Thyroid gland (tissue), 4 donors: ENCODE measurements at regions of chr9 and their contacts with region 1.

Region 1: DNA sequence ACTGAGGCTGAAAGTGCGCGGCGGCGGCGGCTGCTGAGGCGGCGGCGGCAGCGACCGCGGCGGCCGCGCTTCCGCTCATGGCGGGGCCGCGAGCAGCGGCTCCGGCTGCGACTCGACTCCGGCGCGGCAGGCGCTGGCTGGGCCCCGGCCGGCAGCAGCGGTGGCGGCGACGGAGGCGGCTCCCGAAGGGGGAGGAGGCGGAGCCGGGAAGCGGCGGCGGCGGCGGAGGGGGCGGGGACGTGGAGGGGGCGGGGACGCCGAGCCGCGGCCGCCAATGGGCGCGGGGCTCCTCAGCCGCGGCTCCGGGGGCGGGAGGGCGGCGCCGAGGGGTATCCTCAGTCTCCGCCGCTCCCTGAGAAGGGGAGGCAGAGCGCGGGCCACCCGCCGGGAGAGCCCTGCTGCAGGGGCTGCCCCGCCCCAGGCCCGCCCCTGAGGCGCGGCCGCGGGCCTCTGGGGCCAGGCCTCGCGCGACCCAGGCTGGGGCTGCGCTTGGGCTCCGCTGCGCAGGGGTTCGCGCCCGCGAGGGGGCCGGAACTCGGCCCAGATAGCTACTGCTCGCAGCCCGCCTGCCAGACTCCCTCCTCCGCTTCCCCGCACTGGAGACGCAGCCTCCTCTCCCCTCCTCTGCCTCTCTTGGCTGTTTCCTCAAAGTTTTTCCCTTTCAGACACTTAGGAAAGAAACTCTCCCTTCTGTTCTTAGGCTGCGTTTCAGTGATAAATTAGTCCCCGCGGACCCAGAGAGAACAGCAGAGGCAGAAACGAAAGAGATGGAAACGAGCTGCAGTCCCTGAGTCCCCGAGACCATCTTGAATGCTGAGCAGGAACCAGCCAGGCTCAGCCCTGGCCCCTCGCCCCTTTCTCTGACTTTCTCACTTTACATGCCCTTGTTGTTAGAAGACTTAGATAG is 85.0 kb upstream of the MELK start:
- DNase-seq: peak; percentile 94
- H3K4me3 ChIP-seq: peak overlapping the region in 2 of 3 donors; percentile 35 to 46
- H3K27ac ChIP-seq: peak overlapping the region; percentile 82 to 86 (median 86)
- H3K4me1 ChIP-seq: peaks cover 7 to 28% of the 10 kb centered on the region in 2 donors
- H3K27me3 ChIP-seq: no peaks in the 10 kb centered on the region
- CTCF ChIP-seq: peak in 3 of 6 experiments; percentile 16 to 29 (median 28)
- POLR2A ChIP-seq: peak; percentile 56 to 84

Region 2: DNA sequence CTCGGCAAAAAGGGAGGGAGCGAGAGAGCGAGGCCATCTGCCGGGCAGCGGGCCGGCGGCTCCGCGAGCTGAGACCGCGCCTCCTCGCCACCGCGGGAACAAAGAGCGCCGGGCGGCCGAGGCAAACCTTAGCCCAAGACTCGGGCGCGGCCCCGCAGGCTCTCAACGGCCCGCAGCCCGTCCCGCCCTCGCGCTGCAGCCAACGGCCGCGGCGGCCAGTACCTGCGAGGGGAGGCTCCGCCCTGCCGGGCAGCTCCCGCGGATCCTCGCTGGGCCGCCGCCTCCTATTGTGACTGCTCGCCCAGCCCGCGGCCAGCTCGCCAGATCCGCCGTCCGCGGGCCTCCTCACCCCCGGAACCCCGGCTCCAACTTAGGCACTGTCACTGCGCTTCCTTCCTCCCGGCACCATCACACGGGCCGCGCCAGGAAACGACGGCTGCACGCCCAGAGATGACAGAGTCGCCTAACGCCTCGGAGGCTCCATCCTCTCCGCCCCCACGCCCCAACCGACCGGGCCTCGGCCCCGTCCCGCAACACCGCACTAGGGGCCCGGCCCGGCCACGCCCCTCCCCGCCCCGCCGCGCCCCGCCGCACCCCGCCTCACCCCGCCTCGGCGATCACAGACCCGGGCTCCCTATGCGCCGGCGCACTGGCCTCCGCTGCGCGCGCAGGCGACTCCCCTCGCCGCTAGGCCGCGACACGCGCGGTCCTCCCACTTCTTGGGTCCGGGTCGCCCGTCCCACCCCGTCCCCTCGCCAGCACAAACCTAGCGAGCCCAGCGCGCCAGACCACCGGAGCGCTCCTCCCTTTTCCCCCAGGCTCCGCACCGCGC is 87.2 kb before region 1 on chr9:
- intact Hi-C with region 1: loop called (anchors 10 kb)
- DNase-seq: peak; percentile 88 to 89
- H3K4me3 ChIP-seq: peak overlapping the region; percentile 39 to 75 (median 45)
- H3K27ac ChIP-seq: peak overlapping the region; percentile 84 to 90 (median 89)
- H3K4me1 ChIP-seq: peaks cover 32 to 37% of the 10 kb centered on the region in 2 donors
- H3K27me3 ChIP-seq: no peaks in the 10 kb centered on the region
- CTCF ChIP-seq: peak in 1 of 6 experiments; percentile 8
- POLR2A ChIP-seq: peak in 1 of 2 donors; percentile 65